Left cardiac atrium (tissue), 4 donors: ENCODE measurements at regions of chr3 and their contacts with region 1.

Region 1: DNA sequence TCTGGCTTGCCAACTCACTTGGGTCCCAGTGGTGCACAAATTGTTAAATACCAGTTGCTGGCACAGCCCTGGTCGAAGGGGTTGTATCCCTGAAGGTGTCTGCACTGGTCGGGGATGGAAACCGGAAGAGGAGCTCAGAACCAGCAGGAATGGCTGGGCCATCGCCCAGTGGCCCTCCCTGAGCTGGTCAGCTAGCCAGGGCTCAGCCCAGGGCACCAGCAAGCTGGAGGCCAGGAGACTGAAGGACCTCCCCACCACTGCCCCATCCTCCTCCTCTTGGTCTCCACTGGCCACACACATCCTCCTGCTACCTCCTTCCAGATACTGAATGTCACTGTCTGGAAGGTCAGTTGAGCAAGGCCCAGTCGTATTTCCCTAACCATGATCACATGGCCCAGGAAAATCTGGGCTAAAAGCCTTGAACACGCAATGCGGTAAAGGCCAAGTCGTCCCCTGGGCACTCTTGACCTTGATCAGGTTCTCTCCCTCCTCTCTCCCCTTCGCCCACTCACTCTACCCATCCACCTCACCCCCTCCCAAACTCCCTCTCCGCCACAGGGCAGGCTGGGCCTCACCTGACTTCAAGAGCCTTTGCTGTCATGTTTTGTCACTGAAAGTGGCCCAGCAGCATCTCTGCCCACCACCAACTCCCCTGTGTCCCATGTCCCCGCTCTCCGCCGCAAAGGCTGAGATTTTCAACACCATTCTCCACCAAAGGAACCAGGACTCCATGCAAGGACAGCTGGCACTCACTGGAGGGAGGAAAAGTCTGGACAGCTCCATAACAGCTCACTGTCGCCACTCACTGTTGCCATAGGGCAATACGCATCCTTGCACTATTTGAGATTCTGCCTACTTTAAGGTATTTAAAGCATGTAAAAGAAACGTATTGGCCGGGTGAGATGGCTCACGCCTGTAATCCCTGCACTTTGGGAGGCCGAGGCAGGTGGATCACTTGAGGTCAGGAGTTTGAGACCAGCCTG is 12.1 kb downstream of the ZDHHC19 start:
- DNase-seq: no peak
- ATAC-seq: peak in 1 of 2 donors; percentile 25

Region 2: DNA sequence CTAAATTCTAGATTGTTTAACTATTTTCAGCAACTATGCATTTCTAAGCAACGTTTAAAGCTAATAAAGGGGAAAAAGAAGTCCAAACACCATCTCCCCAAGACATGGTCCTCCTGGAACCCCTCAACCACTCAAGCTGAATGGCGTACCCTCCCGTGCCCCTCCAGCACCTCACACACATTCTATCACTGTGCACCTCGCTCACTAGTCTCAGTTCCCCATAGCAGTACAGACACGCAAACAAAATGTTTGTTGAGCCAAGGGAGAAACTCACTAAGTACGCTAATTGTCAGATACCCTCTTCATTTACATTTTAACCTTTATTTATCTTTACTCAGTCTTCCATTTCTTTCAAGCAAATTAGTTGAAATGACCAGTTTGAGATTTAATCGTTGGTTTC is 805.0 kb before region 1 on chr3:
- intact Hi-C with region 1: no loop called
- DNase-seq: no peak
- ATAC-seq: no peak

Region 3: GRCh38 chr3:196024968-196025367 is 174.1 kb before region 1 on chr3:
- intact Hi-C with region 1: loop called (anchors 5 kb)
- DNase-seq: no peak
- ATAC-seq: no peak

Region 4: GRCh38 chr3:196073188-196073838 is 125.7 kb before region 1 on chr3:
- intact Hi-C with region 1: loop called (anchors 2 to 5 kb)
- DNase-seq: peak; percentile 44
- ATAC-seq: peak; percentile 93 to 97

Region 5: GRCh38 chr3:196093317-196094111 is 105.5 kb before region 1 on chr3:
- intact Hi-C with region 1: no loop called
- DNase-seq: no peak
- ATAC-seq: peak; percentile 12 to 60